ENCODE measurements at regions of chr6 and their contacts with region 1.

Region 1: GRCh38 chr6:161370880-161371279 is 97.0 kb upstream of the AGPAT4 start:
- DNase-seq: peak; percentile 70 to 84
- ATAC-seq: peak; percentile 86 to 92 (median 90)
- H3K4me3 ChIP-seq: no peak overlapping the region
- H3K4me3 Mint-ChIP-seq: no peak overlapping the region
- H3K27ac ChIP-seq: no peak overlapping the region
- H3K27ac Mint-ChIP-seq: peak overlapping the region in 1 of 2 donors; percentile 55
- H3K4me1 ChIP-seq: peaks cover 2% of the 10 kb centered on the region
- H3K4me1 Mint-ChIP-seq: peaks cover 0 to 5% of the 10 kb centered on the region in 2 donors
- H3K27me3 ChIP-seq: no peaks in the 10 kb centered on the region
- H3K27me3 Mint-ChIP-seq: no peaks in the 10 kb centered on the region
- CTCF ChIP-seq: peak; percentile 95

Region 2: DNA sequence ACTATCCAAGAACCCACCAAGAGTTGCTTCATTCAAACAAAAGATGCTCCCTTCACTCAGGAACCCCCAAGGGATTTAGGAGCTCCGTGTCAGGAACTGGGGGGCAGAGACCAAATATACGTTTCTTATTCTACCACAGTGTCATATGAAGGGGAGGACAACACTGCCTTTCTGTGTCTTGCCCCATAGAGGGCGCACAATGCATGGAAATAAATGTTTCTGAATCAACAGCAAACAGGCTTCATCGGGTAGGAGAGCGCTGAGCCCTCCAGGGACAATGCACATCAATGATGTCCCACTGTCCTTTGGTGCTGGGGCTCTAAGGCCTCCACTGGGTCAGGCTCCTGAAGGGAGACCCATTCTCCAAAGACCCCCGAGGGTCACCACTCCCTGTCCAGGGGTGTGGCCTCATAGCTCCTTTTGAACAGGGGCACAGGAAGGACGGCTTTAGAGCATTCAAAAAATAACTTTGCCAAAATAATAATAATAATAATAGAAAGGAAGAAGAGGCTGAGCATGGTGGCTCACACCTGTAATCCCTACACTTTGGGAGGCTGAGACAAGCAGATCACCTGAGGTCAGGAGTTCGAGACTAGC is 637.7 kb before region 1 on chr6:
- intact Hi-C with region 1: loop called (anchors 1 kb)
- DNase-seq: peak in 1 of 2 donors; percentile 60
- ATAC-seq: peak; percentile 54 to 67 (median 58)
- H3K4me3 ChIP-seq: no peak overlapping the region
- H3K4me3 Mint-ChIP-seq: no peak overlapping the region
- H3K27ac ChIP-seq: no peak overlapping the region
- H3K27ac Mint-ChIP-seq: no peak overlapping the region
- H3K4me1 ChIP-seq: no peaks in the 10 kb centered on the region
- H3K4me1 Mint-ChIP-seq: no peaks in the 10 kb centered on the region
- H3K27me3 ChIP-seq: no peaks in the 10 kb centered on the region
- H3K27me3 Mint-ChIP-seq: peaks cover 0 to 3% of the 10 kb centered on the region in 2 donors
- CTCF ChIP-seq: peak; percentile 28

Region 3: DNA sequence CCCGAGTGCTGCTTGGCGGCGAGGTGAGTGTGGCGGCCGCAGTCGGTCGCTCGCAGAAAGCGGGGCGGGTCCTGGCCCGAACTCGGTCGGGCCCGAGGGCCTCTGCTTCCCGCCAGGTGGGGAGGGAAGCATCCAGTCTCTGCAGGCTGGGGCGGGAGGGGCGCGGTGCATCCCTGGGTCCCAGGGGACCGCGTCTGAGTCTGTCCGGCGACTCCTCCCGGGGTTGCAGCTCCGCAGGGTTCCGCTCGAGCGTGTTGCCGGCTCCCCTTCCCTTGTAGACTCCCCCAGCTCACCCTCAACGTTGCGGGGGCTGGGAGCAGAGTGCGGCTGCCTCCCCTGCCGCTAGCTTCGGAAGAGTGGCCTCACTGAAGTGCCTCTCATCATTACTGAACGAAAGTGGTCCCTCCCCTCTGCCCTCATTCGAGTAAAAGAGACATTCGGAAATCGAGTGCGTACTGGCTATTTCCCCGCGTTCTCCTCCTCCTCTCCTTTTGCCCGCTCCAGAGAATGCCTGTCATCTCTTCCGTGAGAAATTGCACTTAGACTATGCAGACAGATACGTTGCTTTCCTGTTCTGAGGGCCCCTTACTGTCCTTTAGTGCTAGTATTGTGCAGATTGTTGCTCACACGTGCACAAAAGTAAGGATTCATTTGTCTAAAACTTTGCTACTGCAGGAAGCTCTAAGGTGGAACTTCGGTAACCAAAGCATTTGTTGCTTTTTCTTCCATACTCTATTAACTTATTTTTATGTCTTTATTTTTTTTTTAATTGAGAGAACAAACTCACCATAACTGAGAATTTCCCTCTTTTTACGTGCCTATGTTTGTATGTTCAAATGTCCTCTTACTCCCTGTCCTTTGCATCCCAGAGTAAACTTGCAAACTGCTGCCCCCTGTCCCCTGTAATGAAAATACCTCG is 378.6 kb before region 1 on chr6:
- intact Hi-C with region 1: loop called (anchors 5 kb)
- DNase-seq: peak in 1 of 2 donors; percentile 72
- ATAC-seq: peak; percentile 50 to 74 (median 60)
- H3K4me3 ChIP-seq: peak overlapping the region; percentile 57
- H3K4me3 Mint-ChIP-seq: peak overlapping the region; percentile 99
- H3K27ac ChIP-seq: peak overlapping the region; percentile 74
- H3K27ac Mint-ChIP-seq: peak overlapping the region; percentile 88 to 94
- H3K4me1 ChIP-seq: peaks cover 7% of the 10 kb centered on the region
- H3K4me1 Mint-ChIP-seq: peaks cover 36 to 41% of the 10 kb centered on the region in 2 donors
- H3K27me3 ChIP-seq: no peaks in the 10 kb centered on the region
- H3K27me3 Mint-ChIP-seq: peaks cover 0 to 5% of the 10 kb centered on the region in 2 donors
- CTCF ChIP-seq: no peak

Region 4: GRCh38 chr6:161079566-161080262 is 291.2 kb before region 1 on chr6:
- intact Hi-C with region 1: no loop called
- DNase-seq: peak in 1 of 2 donors; percentile 67
- ATAC-seq: peak; percentile 50 to 64 (median 60)
- H3K4me3 ChIP-seq: no peak overlapping the region
- H3K4me3 Mint-ChIP-seq: no peak overlapping the region
- H3K27ac ChIP-seq: no peak overlapping the region
- H3K27ac Mint-ChIP-seq: peak overlapping the region in 1 of 2 donors; percentile 54
- H3K4me1 ChIP-seq: peaks cover 4% of the 10 kb centered on the region
- H3K4me1 Mint-ChIP-seq: peaks cover 0 to 8% of the 10 kb centered on the region in 2 donors
- H3K27me3 ChIP-seq: no peaks in the 10 kb centered on the region
- H3K27me3 Mint-ChIP-seq: no peaks in the 10 kb centered on the region
- CTCF ChIP-seq: no peak

Region 5: GRCh38 chr6:161152907-161153662 is 217.8 kb before region 1 on chr6:
- intact Hi-C with region 1: loop called (anchors 1 kb)
- DNase-seq: peak; percentile 27 to 36
- ATAC-seq: peak; percentile 11 to 78 (median 77)
- H3K4me3 ChIP-seq: no peak overlapping the region
- H3K4me3 Mint-ChIP-seq: no peak overlapping the region
- H3K27ac ChIP-seq: no peak overlapping the region
- H3K27ac Mint-ChIP-seq: peak overlapping the region in 1 of 2 donors; percentile 67
- H3K4me1 ChIP-seq: no peaks in the 10 kb centered on the region
- H3K4me1 Mint-ChIP-seq: peaks cover 0 to 14% of the 10 kb centered on the region in 2 donors
- H3K27me3 ChIP-seq: no peaks in the 10 kb centered on the region
- H3K27me3 Mint-ChIP-seq: no peaks in the 10 kb centered on the region
- CTCF ChIP-seq: peak; percentile 36

Region 6: DNA sequence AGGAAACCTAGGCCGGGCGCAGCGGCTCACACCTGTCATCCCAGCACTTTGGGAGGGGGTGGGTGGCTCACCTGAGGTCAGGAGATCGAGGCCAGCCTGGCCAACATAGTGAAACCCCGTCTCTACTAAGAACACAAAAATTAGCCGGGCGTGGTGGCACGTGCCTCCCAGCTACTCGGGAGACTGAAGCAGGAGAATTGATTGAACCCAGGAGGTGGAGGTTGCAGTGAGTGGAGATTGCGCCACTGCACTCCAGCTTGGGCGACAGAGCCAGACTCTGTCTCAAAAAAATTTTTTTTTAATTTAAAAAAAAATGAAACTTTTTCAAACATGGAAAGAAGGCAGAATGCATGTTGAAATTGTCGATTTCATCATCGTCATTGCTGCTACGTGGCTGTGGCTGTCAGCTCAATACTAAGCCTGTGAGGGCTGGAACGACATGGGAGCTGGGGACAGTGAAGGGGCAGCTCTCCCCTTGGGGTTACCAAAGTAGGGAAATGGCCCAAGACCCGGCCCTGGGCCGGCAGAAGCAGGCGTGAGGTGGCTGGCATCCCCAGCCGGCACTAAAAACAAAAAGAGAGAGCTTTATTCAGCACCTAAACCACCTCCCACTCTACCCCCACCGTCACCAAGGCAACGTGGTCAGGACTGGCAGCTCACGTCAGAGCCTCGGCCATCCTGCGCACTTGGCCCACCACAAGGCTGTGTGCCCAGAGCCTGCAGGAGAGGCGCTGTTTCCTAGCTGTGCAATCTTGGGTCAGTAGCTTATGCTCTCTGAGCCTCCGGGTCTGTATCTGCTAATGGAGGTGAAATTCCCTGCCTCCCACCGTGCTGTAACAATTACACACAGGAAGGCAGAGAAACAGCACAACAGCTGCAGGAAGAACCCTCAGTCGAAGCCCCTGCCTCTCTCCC is 127.8 kb before region 1 on chr6:
- intact Hi-C with region 1: loop called (anchors 1 kb)
- DNase-seq: peak; percentile 85 to 90
- ATAC-seq: peak; percentile 75 to 87 (median 79)
- H3K4me3 ChIP-seq: no peak overlapping the region
- H3K4me3 Mint-ChIP-seq: peak overlapping the region; percentile 84
- H3K27ac ChIP-seq: peak overlapping the region; percentile 77
- H3K27ac Mint-ChIP-seq: peak overlapping the region; percentile 92 to 95
- H3K4me1 ChIP-seq: peaks cover 30% of the 10 kb centered on the region
- H3K4me1 Mint-ChIP-seq: peaks cover 39 to 41% of the 10 kb centered on the region in 2 donors
- H3K27me3 ChIP-seq: no peaks in the 10 kb centered on the region
- H3K27me3 Mint-ChIP-seq: peaks cover 2 to 26% of the 10 kb centered on the region in 2 donors
- CTCF ChIP-seq: peak; percentile 16

Measured in natural killer cell (primary cell).